PC-3 (cell line): ENCODE measurements at regions of chr6 and their contacts with region 1.

Region 1: GRCh38 chr6:99425647-99426453 is 742 bp upstream of the PNISR start:
- DNase-seq: peak; percentile 70
- ATAC-seq: peak; percentile 65
- H3K4me3 ChIP-seq: peak overlapping the region; percentile 82
- H3K27ac ChIP-seq: peak overlapping the region; percentile 83
- H3K4me1 ChIP-seq: peaks cover 25% of the 10 kb centered on the region
- H3K27me3 ChIP-seq: no peaks in the 10 kb centered on the region
- CTCF ChIP-seq: peak; percentile 49

Region 2: DNA sequence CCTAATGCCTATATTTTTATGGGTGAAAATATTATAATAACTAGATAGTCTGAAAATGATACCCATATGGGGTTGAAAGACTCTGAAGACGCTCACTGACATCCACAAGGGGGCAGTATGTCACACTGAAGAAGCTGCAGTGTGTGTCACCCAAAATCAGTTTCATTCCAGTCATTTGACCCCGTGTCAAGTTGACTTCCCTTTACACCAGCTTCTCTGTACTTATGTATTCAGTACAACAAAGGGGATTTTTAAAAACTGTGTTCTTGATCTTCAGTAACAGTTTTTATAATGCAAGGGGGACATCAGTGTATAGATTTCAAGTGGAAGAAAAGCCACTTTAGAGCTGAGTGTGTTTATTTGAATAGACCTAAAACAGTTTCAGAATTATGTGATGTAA is 95.7 kb before region 1 on chr6:
- CTCF ChIA-PET with region 1: interaction called, 5 read pairs
- POLR2A ChIA-PET with region 1: no interaction called
- intact Hi-C with region 1: loop called (anchors 1 kb)
- DNase-seq: peak; percentile 73
- ATAC-seq: peak; percentile 94
- H3K4me3 ChIP-seq: no peak overlapping the region
- H3K27ac ChIP-seq: no peak overlapping the region
- H3K4me1 ChIP-seq: no peaks in the 10 kb centered on the region
- H3K27me3 ChIP-seq: no peaks in the 10 kb centered on the region
- CTCF ChIP-seq: peak; percentile 83

Region 3: DNA sequence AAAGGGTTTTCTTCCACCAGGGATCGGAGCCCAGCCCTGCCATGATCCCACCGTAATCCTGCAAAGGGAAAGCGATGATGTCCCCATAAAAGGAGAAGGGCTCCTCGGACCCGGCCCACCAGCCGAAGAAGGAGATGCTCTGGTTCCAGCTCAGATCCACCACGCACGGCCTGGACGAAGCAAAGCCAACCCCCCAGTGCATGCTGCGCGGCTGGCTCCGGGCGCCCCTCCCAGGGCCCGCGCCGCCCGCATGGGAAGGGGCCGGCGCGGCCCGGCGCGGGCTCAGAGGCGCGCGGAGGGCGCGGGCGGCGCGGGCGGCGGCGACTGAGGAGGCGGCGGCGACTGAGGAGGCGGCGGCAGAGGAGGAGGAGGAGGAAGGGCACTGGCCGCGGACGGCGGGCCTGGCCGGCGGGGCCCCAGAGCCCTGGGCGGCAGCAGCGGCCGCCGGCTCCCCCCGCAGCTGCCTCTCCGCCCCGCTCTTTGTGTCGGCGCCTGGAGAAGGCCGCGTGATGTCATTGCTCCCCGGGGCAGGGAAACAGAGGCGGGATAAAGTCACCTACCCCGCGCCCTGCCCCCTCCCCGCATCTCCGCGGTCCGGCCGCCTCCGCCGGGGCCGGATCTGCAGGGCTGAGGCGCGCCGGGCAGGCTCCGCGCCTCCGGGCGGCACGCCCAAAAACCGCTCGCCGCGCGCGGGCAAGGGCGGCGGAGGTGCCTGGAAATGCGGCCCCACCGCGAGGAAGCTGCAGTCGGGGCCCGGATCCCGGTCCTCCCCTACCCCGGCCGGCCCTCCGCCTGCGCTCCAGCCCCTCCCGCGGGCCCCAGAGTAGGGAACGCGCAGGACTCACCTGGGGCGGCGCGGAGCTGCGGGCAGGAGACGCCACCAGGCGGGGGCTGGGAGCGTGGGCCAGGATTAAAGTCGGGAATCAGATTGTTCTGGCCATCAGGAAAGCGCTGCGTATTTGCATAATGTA is 76.4 kb before region 1 on chr6 and contains the start of gene FAXC:
- CTCF ChIA-PET with region 1: no interaction called
- POLR2A ChIA-PET with region 1: interaction called, 10 read pairs
- intact Hi-C with region 1: no loop called
- DNase-seq: peak; percentile 58
- ATAC-seq: peak; percentile 84
- H3K4me3 ChIP-seq: peak within 1 kb of the TSS; percentile 82
- H3K27ac ChIP-seq: no peak within 1 kb of the TSS
- H3K4me1 ChIP-seq: peaks cover 21% of the 10 kb centered on the region
- H3K27me3 ChIP-seq: no peaks in the 10 kb centered on the region
- CTCF ChIP-seq: peak; percentile 42; the same call in 1 of the 2 replicates
- total RNA-seq, gene FAXC: 3.9 and 5.4 TPM in 2 replicates

Region 4: GRCh38 chr6:99689916-99690685 is 264.3 kb after region 1 on chr6:
- CTCF ChIA-PET with region 1: no interaction called
- POLR2A ChIA-PET with region 1: no interaction called
- intact Hi-C with region 1: no loop called
- DNase-seq: no peak
- ATAC-seq: no peak
- H3K4me3 ChIP-seq: no peak overlapping the region
- H3K27ac ChIP-seq: no peak overlapping the region
- H3K4me1 ChIP-seq: no peaks in the 10 kb centered on the region
- H3K27me3 ChIP-seq: peaks cover 20% of the 10 kb centered on the region
- CTCF ChIP-seq: no peak